ENCODE measurements at regions of chr1 and their contacts with region 1.

Region 1: GRCh38 chr1:43552798-43553197 is 22.1 kb downstream of the PTPRF start:
- DNase-seq: peak; percentile 47
- ATAC-seq: peak; percentile 87
- H3K4me3 ChIP-seq: no peak overlapping the region
- H3K27ac ChIP-seq: no peak overlapping the region
- H3K4me1 ChIP-seq: no peaks in the 10 kb centered on the region; the same call in 1 of the 2 replicates
- H3K27me3 ChIP-seq: no peaks in the 10 kb centered on the region
- CTCF ChIP-seq: no peak
- POLR2A ChIP-seq: no peak
- RAD21 ChIP-seq: no peak

Region 2: GRCh38 chr1:42639116-42639515 is 913.7 kb before region 1 on chr1:
- CTCF ChIA-PET with region 1: no interaction called
- POLR2A ChIA-PET with region 1: no interaction called
- dilution Hi-C with region 1: no loop called
- in situ Hi-C with region 1: no loop called
- intact Hi-C with region 1: no loop called
- DNase-seq: peak; percentile 8
- ATAC-seq: no peak
- H3K4me3 ChIP-seq: no peak overlapping the region
- H3K27ac ChIP-seq: no peak overlapping the region
- H3K4me1 ChIP-seq: no peaks in the 10 kb centered on the region
- H3K27me3 ChIP-seq: peaks cover 5% of the 10 kb centered on the region; the same call in 1 of the 2 replicates
- CTCF ChIP-seq: no peak
- POLR2A ChIP-seq: no peak
- RAD21 ChIP-seq: no peak

Region 3: DNA sequence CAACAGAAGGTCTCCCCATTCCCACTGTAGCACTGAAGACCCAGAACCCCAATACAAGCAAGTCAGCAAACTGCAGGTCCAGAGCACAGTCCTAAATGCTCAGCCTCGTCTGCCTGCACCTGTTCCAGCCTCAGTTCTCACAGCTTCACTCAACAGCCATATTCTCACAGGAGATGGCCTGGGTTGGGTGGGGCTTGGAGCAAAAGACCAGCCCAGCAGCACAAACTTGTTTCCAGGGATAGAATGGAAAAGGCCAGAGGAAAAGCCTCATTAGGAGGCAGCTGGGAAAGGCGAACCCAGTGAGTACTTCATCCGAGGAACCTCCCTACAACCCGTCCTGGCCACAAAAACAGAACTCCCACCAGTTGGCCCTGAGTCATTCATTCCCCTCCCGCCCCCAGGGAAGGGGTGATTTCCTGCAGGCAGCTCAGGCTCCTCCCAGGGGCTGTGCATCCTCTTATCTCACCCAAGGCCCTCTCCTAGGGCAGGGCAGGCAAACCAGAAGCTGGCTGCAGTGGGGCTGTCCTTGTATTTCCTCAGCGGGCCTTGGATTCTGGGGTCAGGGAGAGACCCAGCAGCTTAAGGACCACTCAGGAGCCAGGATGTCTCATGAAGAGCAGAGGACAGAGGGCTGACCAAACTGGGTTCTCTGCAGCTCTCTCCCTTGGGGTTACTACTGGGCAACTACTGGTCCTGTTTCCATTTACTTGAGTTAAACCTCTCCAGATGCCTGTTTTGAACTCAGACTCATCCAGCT is 222.6 kb before region 1 on chr1:
- CTCF ChIA-PET with region 1: no interaction called
- POLR2A ChIA-PET with region 1: no interaction called
- dilution Hi-C with region 1: no loop called
- in situ Hi-C with region 1: no loop called
- intact Hi-C with region 1: no loop called
- DNase-seq: peak; percentile 87
- ATAC-seq: peak; percentile 99
- H3K4me3 ChIP-seq: no peak overlapping the region
- H3K27ac ChIP-seq: peak overlapping the region; percentile 61; the same call in 1 of the 2 replicates
- H3K4me1 ChIP-seq: peaks cover 6% of the 10 kb centered on the region
- H3K27me3 ChIP-seq: 0 out of 2 replicates have a peak, but pooled peaks cover 1% of the 10 kb centered on the region
- CTCF ChIP-seq: no peak
- POLR2A ChIP-seq: no peak
- RAD21 ChIP-seq: 0 out of 2 replicates have a peak, but pooled peaks have one; percentile 12

Region 4: GRCh38 chr1:43414634-43415223 is 138.1 kb before region 1 on chr1:
- CTCF ChIA-PET with region 1: no interaction called
- POLR2A ChIA-PET with region 1: no interaction called
- dilution Hi-C with region 1: no loop called
- in situ Hi-C with region 1: no loop called
- intact Hi-C with region 1: no loop called
- DNase-seq: peak; percentile 52
- ATAC-seq: peak; percentile 88
- H3K4me3 ChIP-seq: no peak overlapping the region
- H3K27ac ChIP-seq: no peak overlapping the region
- H3K4me1 ChIP-seq: no peaks in the 10 kb centered on the region
- H3K27me3 ChIP-seq: no peaks in the 10 kb centered on the region
- CTCF ChIP-seq: peak; percentile 66
- POLR2A ChIP-seq: no peak
- RAD21 ChIP-seq: peak; percentile 83

Region 5: GRCh38 chr1:43537423-43538159 is 15.2 kb before region 1 on chr1:
- CTCF ChIA-PET with region 1: interaction called, 5 read pairs
- POLR2A ChIA-PET with region 1: no interaction called
- dilution Hi-C with region 1: no loop called
- in situ Hi-C with region 1: no loop called
- intact Hi-C with region 1: loop called (anchors 2 kb)
- DNase-seq: peak; percentile 20
- ATAC-seq: no peak
- H3K4me3 ChIP-seq: no peak overlapping the region
- H3K27ac ChIP-seq: no peak overlapping the region
- H3K4me1 ChIP-seq: no peaks in the 10 kb centered on the region; the same call in 1 of the 2 replicates
- H3K27me3 ChIP-seq: no peaks in the 10 kb centered on the region
- CTCF ChIP-seq: no peak
- POLR2A ChIP-seq: no peak
- RAD21 ChIP-seq: no peak